OCI-LY7 (cell line): ENCODE measurements at regions of chr15 and their contacts with region 1.

Region 1: GRCh38 chr15:31265871-31266711 is 60.5 kb upstream of the KLF13 start:
- DNase-seq: peak; percentile 95
- H3K4me3 ChIP-seq: peak overlapping the region; percentile 35
- H3K27ac ChIP-seq: peak overlapping the region; percentile 97
- H3K4me1 ChIP-seq: peaks cover 100% of the 10 kb centered on the region
- CTCF ChIP-seq: peak; percentile 58; the same call in 1 of the 2 replicates

Region 2: DNA sequence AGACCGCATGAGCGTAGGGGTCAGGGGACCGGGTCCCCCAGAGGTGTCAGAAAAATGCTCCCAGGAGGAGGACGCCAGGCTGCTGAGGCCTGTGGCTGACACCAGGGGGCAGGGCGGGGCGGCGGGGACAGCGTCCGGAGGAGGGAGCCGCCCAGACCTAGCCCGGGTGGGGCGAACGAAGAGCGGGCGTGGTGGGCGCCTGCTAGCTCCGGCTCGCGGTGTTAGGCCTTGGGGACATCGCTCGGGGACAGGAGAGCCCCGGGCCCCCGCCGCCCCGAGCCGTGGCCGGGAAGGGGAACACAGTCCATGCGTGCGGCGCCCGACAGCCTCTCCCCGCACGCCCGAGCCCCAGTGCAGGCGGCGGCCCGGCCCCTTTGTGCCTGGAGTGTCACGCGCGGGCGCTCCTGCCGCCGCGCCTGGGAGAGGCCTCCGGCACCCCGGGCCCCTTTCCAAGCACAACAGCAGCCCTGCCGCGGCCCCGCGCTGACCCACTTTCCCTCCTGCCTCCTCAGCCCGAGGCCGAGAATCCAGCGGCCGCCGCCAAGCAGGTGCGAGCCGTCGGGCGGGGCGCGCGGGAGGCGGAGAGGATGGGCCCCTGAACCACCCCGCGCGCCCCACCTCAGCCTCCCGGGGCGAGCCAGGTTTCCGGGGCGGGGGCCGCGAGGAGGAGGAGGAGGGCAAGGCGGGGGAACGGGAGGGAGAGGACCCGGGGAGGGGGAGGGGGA is 50.4 kb before region 1 on chr15:
- CTCF ChIA-PET with region 1: interaction called, 7 read pairs
- POLR2A ChIA-PET with region 1: interaction called, 11 read pairs
- intact Hi-C with region 1: loop called (anchors 1 kb)
- DNase-seq: peak; percentile 87
- H3K4me3 ChIP-seq: peak overlapping the region; percentile 70
- H3K27ac ChIP-seq: peak overlapping the region; percentile 82
- H3K4me1 ChIP-seq: peaks cover 49% of the 10 kb centered on the region
- CTCF ChIP-seq: peak; percentile 83

Region 3: DNA sequence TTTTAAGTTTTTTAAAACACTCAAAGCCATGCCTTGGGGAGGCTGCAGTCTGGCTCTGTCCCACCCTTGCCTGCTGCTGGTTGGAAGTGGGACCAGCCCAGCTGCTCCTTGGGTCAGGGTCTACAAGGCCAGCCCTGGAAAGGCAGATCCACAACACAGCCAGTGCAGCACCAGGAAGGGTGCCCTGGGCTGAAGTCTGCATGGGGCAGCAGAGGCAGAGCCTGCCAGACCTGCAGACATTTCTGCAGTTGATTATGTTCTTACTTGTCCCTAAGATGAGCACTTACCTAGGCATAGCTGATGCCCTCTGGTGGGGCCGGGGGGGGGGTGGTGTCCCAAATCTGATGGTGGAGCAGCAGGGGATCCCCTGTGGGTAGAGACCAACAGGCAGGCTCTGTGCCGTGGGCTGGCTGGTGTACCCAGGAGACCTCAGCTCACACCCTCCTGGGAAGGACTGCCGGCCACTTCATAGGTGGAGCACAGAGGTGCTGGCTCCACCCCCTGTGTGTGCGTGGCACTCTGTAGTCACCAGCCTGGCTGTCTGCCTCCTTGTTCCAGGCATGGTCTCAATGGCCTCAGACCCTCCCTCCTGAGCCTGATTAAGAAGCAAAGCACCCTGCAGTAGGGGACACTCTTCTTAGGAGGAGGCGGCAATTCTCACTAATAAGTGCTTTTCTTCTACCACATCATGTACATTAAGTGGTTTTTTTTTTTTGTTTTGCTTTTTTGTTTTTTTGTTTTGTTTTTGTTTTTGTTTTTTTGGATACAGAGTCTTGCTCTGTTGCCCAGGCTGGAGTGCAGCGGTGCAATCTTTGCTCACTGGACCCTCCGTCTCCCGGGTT is 36.9 kb before region 1 on chr15:
- CTCF ChIA-PET with region 1: interaction called, 12 read pairs
- POLR2A ChIA-PET with region 1: interaction called, 81 read pairs
- intact Hi-C with region 1: loop called (anchors 1 kb)
- DNase-seq: peak; percentile 91
- H3K4me3 ChIP-seq: peak overlapping the region; percentile 77
- H3K27ac ChIP-seq: peak overlapping the region; percentile 99
- H3K4me1 ChIP-seq: peaks cover 94% of the 10 kb centered on the region
- CTCF ChIP-seq: no peak

Region 4: DNA sequence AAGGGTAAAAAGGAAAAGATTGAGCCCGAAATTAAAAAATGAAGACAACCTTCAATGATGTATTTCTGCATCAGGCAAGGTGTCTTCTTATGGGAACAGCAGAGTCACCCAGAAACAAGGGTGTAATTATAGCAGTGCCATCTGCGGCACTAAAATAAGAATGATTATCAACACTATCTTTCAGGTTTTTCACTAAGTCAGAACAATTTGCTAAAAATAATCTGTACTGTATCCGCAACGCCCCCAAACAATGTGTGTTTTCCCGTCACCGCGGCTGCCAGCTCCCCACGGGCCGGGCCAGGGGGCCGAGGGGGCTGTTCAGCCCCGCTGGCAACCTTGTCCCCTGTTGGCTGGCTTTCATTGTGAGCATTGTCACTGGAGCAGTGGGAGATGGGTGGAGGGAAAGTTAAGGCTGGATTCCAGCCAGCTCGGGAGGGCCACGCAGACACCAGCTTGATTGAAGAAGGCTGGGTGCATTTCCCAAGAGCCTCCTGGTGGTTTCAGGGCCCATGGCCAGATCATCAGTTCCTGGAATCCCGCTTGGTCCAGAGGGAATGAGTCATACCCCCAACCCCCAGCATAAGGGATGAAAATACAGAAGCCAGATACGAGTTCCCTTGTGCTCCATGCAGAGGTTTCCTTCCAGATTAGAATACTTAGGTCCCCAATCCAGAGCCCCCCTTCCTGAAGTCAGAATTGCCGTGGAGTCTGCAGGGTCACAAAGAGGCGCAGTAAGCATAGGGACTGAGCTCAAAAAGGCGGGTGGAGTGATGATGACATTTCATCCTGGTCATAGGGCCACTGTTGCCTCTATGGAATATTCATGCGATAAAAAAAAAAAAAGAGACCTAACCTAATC is 29.7 kb before region 1 on chr15:
- CTCF ChIA-PET with region 1: interaction called, 8 read pairs
- POLR2A ChIA-PET with region 1: interaction called, 81 read pairs
- intact Hi-C with region 1: loop called (anchors 1 kb)
- DNase-seq: peak; percentile 80
- H3K4me3 ChIP-seq: peak overlapping the region; percentile 23
- H3K27ac ChIP-seq: peak overlapping the region; percentile 89
- H3K4me1 ChIP-seq: peaks cover 84% of the 10 kb centered on the region
- CTCF ChIP-seq: no peak; the same call in 1 of the 2 replicates

Region 5: GRCh38 chr15:31254431-31255175 is 11.5 kb before region 1 on chr15:
- CTCF ChIA-PET with region 1: interaction called, 4 read pairs
- POLR2A ChIA-PET with region 1: interaction called, 27 read pairs
- intact Hi-C with region 1: no loop called
- DNase-seq: peak; percentile 79
- H3K4me3 ChIP-seq: no peak overlapping the region
- H3K27ac ChIP-seq: peak overlapping the region; percentile 26
- H3K4me1 ChIP-seq: peaks cover 39% of the 10 kb centered on the region
- CTCF ChIP-seq: no peak

Region 6: GRCh38 chr15:31306426-31307269 is 40.6 kb after region 1 on chr15:
- CTCF ChIA-PET with region 1: interaction called, 6 read pairs
- POLR2A ChIA-PET with region 1: interaction called, 8 read pairs
- intact Hi-C with region 1: loop called (anchors 1 kb)
- DNase-seq: peak; percentile 87
- H3K4me3 ChIP-seq: peak overlapping the region; percentile 56
- H3K27ac ChIP-seq: peak overlapping the region; percentile 87
- H3K4me1 ChIP-seq: peaks cover 90% of the 10 kb centered on the region
- CTCF ChIP-seq: no peak

Region 7: GRCh38 chr15:31458591-31459399 is 192.7 kb after region 1 on chr15:
- CTCF ChIA-PET with region 1: no interaction called
- POLR2A ChIA-PET with region 1: interaction called, 4 read pairs
- intact Hi-C with region 1: loop called (anchors 1 kb)
- DNase-seq: peak; percentile 88
- H3K4me3 ChIP-seq: peak overlapping the region; percentile 62
- H3K27ac ChIP-seq: peak overlapping the region; percentile 96
- H3K4me1 ChIP-seq: peaks cover 95% of the 10 kb centered on the region
- CTCF ChIP-seq: no peak